Activated CD4-positive, alpha-beta T cell treated with anti-CD3 and anti-CD28 coated beads for 36 hours (primary cell): ENCODE measurements at regions of chr12 and their contacts with region 1.

Region 1: GRCh38 chr12:53005986-53006809 is at the start of gene EIF4B:
- DNase-seq: peak; percentile 100
- ATAC-seq: peak; percentile 93
- H3K4me3 Mint-ChIP-seq: peak within 1 kb of the TSS; percentile 96
- H3K27ac Mint-ChIP-seq: peak within 1 kb of the TSS; percentile 99
- H3K4me1 Mint-ChIP-seq: peaks cover 40% of the 10 kb centered on the region
- H3K27me3 Mint-ChIP-seq: no peaks in the 10 kb centered on the region
- total RNA-seq, gene EIF4B: 698 to 781 TPM

Region 2: GRCh38 chr12:52032804-52033502 is 973.2 kb before region 1 on chr12:
- CTCF ChIA-PET with region 1: no interaction called
- POLR2A ChIA-PET with region 1: no interaction called
- intact Hi-C with region 1: loop called in 1 of 2 experiments (anchors 10 kb)
- DNase-seq: peak; percentile 95
- ATAC-seq: peak; percentile 98
- H3K4me3 Mint-ChIP-seq: peak overlapping the region; percentile 70
- H3K27ac Mint-ChIP-seq: peak overlapping the region; percentile 84
- H3K4me1 Mint-ChIP-seq: peaks cover 42% of the 10 kb centered on the region
- H3K27me3 Mint-ChIP-seq: no peaks in the 10 kb centered on the region

Region 3: GRCh38 chr12:52949413-52950331 is 56.5 kb before region 1 on chr12:
- CTCF ChIA-PET with region 1: no interaction called
- POLR2A ChIA-PET with region 1: no interaction called
- intact Hi-C with region 1: loop called in 1 of 2 experiments (anchors 2 kb)
- DNase-seq: no peak
- ATAC-seq: no peak
- H3K4me3 Mint-ChIP-seq: peak overlapping the region; percentile 61
- H3K27ac Mint-ChIP-seq: no peak overlapping the region
- H3K4me1 Mint-ChIP-seq: peaks cover 4% of the 10 kb centered on the region
- H3K27me3 Mint-ChIP-seq: peaks cover 2% of the 10 kb centered on the region

Region 4: DNA sequence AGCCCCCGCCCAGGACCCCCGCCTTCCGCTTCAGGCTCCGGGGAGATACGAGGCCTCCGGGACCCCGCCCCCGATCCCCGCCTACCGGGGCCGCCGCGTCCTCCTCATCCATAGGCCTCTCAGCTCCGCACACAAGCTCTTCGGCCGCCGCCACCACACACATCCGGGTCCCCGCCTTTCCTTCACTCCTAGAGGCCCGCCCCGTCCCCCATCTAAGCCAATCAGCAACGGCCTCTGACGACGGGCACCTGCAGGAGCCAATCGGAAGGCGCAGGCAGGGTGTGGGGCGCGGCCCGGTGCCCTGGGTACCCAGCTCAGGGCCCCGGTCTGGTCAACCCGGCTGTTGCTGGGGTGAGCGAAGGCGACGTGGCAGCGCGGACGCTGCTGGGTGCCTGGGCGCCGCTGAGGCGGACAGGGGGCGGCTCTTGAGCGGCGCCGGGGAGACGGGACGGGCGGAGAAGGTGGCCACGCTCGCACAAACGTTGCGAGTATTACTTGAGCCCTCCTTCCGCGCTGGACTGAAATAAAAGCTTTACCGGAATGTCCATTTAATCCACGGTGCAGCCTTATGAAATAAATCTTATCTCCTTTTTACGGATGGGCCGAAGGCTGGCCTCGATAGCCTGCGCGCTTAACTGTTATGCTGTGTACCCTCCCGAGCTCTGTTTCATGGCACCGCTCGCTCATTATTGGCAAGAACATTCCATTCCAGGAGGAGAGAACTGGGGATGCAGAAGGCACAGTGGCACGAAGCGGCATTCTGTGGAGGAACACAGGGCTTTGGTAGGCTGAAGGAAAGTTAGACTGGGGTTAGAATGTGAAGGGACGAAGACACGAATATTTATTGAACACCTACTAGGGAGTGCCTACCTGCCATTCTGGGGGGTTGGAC is 73.3 kb after region 1 on chr12 and contains the start of gene SPRYD3:
- CTCF ChIA-PET with region 1: interaction called, 5 read pairs
- POLR2A ChIA-PET with region 1: interaction called, 7 read pairs
- intact Hi-C with region 1: loop called (anchors 1 to 2 kb)
- DNase-seq: peak; percentile 98
- ATAC-seq: peak; percentile 98
- H3K4me3 Mint-ChIP-seq: peak within 1 kb of the TSS; percentile 80
- H3K27ac Mint-ChIP-seq: peak within 1 kb of the TSS; percentile 74
- H3K4me1 Mint-ChIP-seq: peaks cover 33% of the 10 kb centered on the region
- H3K27me3 Mint-ChIP-seq: no peaks in the 10 kb centered on the region
- total RNA-seq, gene SPRYD3: 13.7 to 18.2 TPM

Region 5: GRCh38 chr12:53267999-53268647 is 261.9 kb after region 1 on chr12 and contains the start of gene ESPL1:
- CTCF ChIA-PET with region 1: interaction called, 3 read pairs
- POLR2A ChIA-PET with region 1: no interaction called
- intact Hi-C with region 1: loop called in 1 of 2 experiments (anchors 1 kb)
- DNase-seq: peak; percentile 93
- ATAC-seq: peak; percentile 86
- H3K4me3 Mint-ChIP-seq: peak within 1 kb of the TSS; percentile 92
- H3K27ac Mint-ChIP-seq: peak within 1 kb of the TSS; percentile 98
- H3K4me1 Mint-ChIP-seq: peaks cover 30% of the 10 kb centered on the region
- H3K27me3 Mint-ChIP-seq: no peaks in the 10 kb centered on the region
- total RNA-seq, gene ESPL1: 60.8 to 66.9 TPM

Region 6: DNA sequence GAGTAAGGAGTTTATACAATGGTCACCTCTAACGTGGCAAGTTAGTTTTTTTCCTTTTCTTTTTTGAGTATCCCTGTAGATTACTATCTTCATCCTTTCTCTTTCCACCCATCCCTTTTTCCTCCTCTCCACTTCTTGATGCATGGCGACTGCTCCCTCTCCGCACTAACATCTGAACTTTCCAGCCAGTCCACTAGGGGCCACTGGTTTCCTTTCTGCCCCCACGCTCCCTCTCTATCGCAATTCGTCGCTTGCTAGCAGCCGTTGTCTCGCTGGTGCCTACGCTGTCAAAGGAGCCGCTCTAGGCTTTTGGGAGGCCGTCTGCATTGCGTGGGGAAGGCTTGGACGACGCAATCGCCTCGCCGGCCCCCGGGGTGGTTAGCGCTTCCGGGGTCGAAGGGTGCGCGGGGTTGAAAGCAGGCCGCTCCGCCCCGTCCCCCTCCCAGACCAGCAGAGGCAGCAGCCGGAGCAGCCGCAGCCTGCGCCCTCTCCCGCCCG is 445.5 kb after region 1 on chr12 and contains the start of gene PCBP2:
- CTCF ChIA-PET with region 1: no interaction called
- POLR2A ChIA-PET with region 1: no interaction called
- intact Hi-C with region 1: loop called in 1 of 2 experiments (anchors 1 kb)
- DNase-seq: peak; percentile 99
- ATAC-seq: peak; percentile 97
- H3K4me3 Mint-ChIP-seq: peak within 1 kb of the TSS; percentile 94
- H3K27ac Mint-ChIP-seq: peak within 1 kb of the TSS; percentile 96
- H3K4me1 Mint-ChIP-seq: peaks cover 27% of the 10 kb centered on the region
- H3K27me3 Mint-ChIP-seq: no peaks in the 10 kb centered on the region
- total RNA-seq, gene PCBP2: 881 to 999 TPM

Region 7: GRCh38 chr12:53727310-53728041 is 721.3 kb after region 1 on chr12 and contains the start of gene CALCOCO1:
- CTCF ChIA-PET with region 1: no interaction called
- POLR2A ChIA-PET with region 1: no interaction called
- intact Hi-C with region 1: loop called in 1 of 2 experiments (anchors 1 kb)
- DNase-seq: peak; percentile 99
- ATAC-seq: peak; percentile 99
- H3K4me3 Mint-ChIP-seq: peak within 1 kb of the TSS; percentile 80
- H3K27ac Mint-ChIP-seq: peak within 1 kb of the TSS; percentile 73
- H3K4me1 Mint-ChIP-seq: peaks cover 20% of the 10 kb centered on the region
- H3K27me3 Mint-ChIP-seq: no peaks in the 10 kb centered on the region
- total RNA-seq, gene CALCOCO1: 17.1 to 20.4 TPM